Right cardiac atrium (tissue), 5 donors: ENCODE measurements at regions of chr10 and their contacts with region 1.

Region 1: DNA sequence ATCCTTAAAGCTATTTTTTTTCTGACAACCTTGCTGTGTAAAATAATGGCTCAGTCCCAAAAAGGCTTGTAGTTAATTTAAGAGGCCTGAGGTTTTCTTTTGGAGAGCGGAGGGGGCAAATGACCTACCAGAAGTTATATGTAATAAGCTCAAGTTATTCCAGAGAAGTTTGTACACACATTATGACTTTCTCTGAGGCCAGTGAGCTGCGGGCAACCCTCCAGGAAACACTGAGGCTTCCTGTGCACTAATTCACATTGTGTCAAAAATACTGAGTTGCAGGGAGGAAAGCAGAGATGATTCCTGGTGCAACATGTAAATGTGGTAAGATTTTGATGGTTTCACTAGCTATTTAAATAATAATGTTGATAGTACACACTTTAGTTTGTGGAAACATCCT is 188.6 kb downstream of the DIP2C start:
- DNase-seq: no peak
- ATAC-seq: no peak
- H3K4me3 ChIP-seq: no peak overlapping the region
- H3K27ac ChIP-seq: no peak overlapping the region
- H3K4me1 ChIP-seq: peaks cover 10% of the 10 kb centered on the region
- H3K27me3 ChIP-seq: no peaks in the 10 kb centered on the region

Region 2: DNA sequence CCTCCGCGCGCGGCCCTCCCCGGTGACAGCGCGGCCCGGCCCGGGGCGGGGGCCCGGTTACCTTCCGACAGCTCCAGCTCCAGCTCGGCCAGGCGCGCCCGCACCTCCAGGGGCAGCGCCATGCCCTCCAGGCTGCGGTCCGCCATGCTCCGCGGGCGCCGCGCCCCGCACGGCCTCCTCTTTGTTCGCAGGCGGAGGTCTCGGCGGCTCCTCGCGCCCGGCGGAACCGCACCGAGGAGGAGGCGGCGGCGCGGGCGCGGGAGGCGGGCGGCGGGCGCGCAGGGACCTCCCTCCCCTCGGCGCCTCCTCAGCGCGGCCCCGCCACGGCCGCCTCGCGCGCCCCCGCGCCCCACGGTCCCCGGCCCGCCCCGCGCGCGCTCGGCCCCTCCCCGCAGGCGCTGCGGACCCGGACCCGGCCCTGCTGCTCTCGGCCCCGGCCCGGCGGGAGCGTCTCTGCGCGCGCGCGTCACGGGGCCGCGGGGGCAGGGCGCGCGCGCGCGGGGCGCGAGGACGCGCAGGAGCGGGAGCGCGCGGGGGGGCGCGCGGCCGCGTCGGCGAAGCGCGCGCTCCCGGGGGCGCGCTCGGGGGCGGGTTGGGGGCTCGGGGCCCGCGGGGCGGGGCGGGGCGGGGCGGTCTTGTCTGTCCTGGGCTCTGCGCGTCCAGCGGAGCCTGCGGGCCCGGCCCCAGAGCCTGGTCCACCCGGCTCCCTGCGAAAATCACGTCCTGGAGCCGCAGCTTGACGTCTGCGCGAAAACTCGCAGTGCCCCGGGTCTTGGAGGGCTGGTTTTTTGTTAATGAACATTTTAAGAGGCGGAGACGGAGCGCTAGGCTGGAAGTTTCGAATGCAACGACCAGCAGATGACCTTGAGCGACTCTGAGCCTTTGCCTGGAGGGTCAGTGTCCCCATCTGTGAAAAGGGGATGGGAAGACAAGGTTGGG is 188.8 kb after region 1 on chr10 and contains the start of gene DIP2C:
- intact Hi-C with region 1: no loop called
- DNase-seq: peak; percentile 87 to 94 (median 93)
- ATAC-seq: peak; percentile 83 to 89
- H3K4me3 ChIP-seq: peak within 1 kb of the TSS; percentile 95
- H3K27ac ChIP-seq: peak within 1 kb of the TSS; percentile 79
- H3K4me1 ChIP-seq: peaks cover 4% of the 10 kb centered on the region
- H3K27me3 ChIP-seq: no peaks in the 10 kb centered on the region
- total RNA-seq, gene DIP2C: 23.7 to 31.5 (median 26.9) TPM

Region 3: GRCh38 chr10:794466-794865 is 293.6 kb after region 1 on chr10:
- intact Hi-C with region 1: loop called in 2 of 4 experiments (anchors 5 to 10 kb)
- DNase-seq: peak in 1 of 3 donors; percentile 47
- ATAC-seq: peak in 1 of 2 donors; percentile 65
- H3K4me3 ChIP-seq: no peak overlapping the region
- H3K27ac ChIP-seq: no peak overlapping the region
- H3K4me1 ChIP-seq: no peaks in the 10 kb centered on the region
- H3K27me3 ChIP-seq: no peaks in the 10 kb centered on the region